Ascending aorta (tissue), 2 donors: ENCODE measurements at regions of chr10 and their contacts with region 1.

Region 1: DNA sequence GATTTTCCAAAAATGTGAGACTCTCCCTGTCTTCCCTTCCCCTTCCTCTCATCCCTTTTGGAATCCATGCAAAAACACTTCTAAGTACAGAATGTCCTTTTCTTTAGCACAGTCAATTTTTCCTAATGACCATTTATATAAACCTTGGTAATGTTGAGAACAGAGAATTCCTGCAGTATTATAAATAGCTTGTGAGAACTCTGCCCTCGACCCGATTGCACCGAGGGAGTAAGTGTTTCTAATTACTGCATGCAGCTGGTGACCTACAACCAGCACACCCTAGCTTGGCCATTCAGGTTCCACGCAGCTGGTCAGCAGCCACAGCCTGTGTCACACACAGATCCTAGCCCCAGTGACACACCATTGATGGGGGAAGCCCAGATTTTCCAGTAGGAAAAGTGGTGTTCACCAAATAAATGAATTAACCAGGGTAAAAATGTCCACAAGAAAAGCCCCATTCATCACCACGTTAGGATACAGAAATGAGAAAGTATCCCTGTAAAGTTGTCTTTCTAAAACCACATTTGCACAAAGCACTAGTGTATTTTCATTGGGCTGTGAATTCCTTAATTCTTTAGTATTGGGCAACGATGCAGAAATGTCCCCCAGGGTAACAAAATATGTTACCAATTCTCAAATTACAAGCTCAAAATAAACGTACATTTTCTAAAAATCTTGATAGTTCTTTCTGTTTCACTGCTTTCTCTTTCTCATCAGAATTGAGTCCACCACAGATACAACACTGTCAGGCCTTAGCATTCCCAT is 499.0 kb upstream of the KLF6 start:
- DNase-seq: peak; percentile 61 to 94
- H3K4me3 ChIP-seq: no peak overlapping the region
- H3K27ac ChIP-seq: peak overlapping the region; percentile 86 to 92
- H3K4me1 ChIP-seq: peaks cover 9 to 57% of the 10 kb centered on the region in 2 donors
- H3K27me3 ChIP-seq: no peaks in the 10 kb centered on the region
- CTCF ChIP-seq: no peak

Region 2: GRCh38 chr10:3877211-3878000 is 406.6 kb before region 1 on chr10:
- intact Hi-C with region 1: no loop called
- DNase-seq: no peak
- H3K4me3 ChIP-seq: no peak overlapping the region
- H3K27ac ChIP-seq: peak overlapping the region in 1 of 2 donors; percentile 43
- H3K4me1 ChIP-seq: peaks cover 0 to 9% of the 10 kb centered on the region in 2 donors
- H3K27me3 ChIP-seq: no peaks in the 10 kb centered on the region
- CTCF ChIP-seq: no peak

Region 3: DNA sequence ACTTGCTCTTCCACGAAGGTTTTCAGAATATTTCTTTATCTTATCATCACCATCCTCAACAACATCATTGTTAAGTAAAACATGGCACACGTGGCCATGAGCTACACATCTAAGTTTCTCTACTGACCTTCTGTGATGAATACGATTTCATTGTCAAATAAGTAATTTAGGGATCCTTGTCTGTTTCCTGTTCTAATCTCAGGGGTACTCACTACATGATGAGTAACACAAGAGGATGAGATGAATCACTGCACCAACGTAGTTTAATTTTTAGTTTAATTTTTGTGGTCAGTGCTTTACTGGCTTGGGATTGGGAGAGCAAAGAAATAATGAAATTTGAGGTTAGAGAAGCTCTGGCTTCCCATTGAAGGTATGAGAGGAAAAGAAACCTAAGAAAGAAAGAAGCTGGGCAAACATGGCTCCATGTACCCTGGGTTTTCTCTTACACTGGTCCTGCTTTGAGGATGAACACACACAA is 37.1 kb before region 1 on chr10:
- intact Hi-C with region 1: loop called (anchors 2 kb)
- DNase-seq: no peak
- H3K4me3 ChIP-seq: peak overlapping the region in 1 of 2 donors; percentile 2
- H3K27ac ChIP-seq: peak overlapping the region; percentile 87 to 94
- H3K4me1 ChIP-seq: peaks cover 3 to 27% of the 10 kb centered on the region in 2 donors
- H3K27me3 ChIP-seq: no peaks in the 10 kb centered on the region
- CTCF ChIP-seq: no peak

Region 4: DNA sequence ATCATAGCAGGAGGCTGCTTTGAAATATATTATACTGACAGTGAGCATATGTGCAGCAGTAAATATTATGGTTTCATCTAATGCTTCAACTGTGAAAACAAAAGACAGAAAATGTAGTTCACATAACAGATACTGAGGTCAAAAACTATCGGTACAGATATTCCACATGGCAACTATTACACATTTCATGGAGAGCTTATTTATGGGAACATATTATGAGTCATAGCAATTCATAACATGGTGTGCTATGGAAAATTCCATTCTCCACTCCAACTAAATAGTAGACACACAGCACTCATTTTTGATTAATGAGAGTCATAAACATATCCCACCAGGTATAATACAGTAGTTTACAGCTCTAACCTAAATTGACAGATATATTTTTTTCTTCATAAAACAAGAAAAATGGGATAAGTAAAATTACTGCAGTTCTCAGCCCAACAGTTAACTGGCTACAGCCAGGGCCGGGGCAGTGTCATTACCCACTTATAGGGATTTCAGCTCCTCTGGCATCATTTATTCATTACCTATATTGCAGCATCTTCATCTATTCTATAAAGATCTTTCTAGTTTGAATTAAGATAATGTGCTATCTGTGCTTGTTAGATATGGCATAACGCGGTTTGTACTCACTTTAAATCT is 23.4 kb before region 1 on chr10:
- intact Hi-C with region 1: loop called (anchors 2 kb)
- DNase-seq: no peak
- H3K4me3 ChIP-seq: peak overlapping the region in 1 of 2 donors; percentile 23
- H3K27ac ChIP-seq: peak overlapping the region; percentile 58 to 72
- H3K4me1 ChIP-seq: peaks cover 9 to 20% of the 10 kb centered on the region in 2 donors
- H3K27me3 ChIP-seq: no peaks in the 10 kb centered on the region
- CTCF ChIP-seq: no peak

Region 5: GRCh38 chr10:4333459-4333894 is 49.4 kb after region 1 on chr10:
- intact Hi-C with region 1: no loop called
- DNase-seq: no peak
- H3K4me3 ChIP-seq: no peak overlapping the region
- H3K27ac ChIP-seq: no peak overlapping the region
- H3K4me1 ChIP-seq: peaks cover 0 to 10% of the 10 kb centered on the region in 2 donors
- H3K27me3 ChIP-seq: no peaks in the 10 kb centered on the region
- CTCF ChIP-seq: no peak

Region 6: GRCh38 chr10:4541292-4541691 is 257.3 kb after region 1 on chr10:
- intact Hi-C with region 1: loop called (anchors 5 kb)
- DNase-seq: peak; percentile 41 to 93
- H3K4me3 ChIP-seq: no peak overlapping the region
- H3K27ac ChIP-seq: peak overlapping the region; percentile 81 to 94
- H3K4me1 ChIP-seq: peaks cover 5 to 12% of the 10 kb centered on the region in 2 donors
- H3K27me3 ChIP-seq: no peaks in the 10 kb centered on the region
- CTCF ChIP-seq: peak; percentile 29 to 46 (median 37)

Region 7: DNA sequence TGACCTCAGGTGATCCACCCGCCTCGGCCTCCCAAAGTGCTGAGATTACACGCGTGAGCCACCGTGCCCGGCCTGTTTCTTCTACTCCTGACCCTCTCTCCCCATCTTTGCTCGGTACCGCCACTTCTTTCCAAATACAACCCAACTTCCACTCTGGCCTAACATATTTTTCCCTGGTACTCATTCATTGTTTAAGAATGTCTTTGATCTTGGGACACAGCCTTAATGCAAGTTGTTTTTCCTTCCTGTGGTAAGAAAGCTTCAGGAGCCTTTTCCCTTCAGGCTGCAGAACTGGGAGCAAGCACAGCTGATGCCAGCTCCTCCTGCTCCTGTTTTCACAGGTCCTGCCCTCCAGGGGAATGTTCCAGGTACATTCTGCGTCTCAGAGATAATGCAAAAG is 1254.4 kb after region 1 on chr10:
- intact Hi-C with region 1: no loop called
- DNase-seq: peak in 1 of 2 donors; percentile 61
- H3K4me3 ChIP-seq: no peak overlapping the region
- H3K27ac ChIP-seq: peak overlapping the region; percentile 61 to 87
- H3K4me1 ChIP-seq: peaks cover 10 to 42% of the 10 kb centered on the region in 2 donors
- H3K27me3 ChIP-seq: no peaks in the 10 kb centered on the region
- CTCF ChIP-seq: no peak